Transverse colon (tissue), 4 donors: ENCODE measurements at regions of chr2 and their contacts with region 1.

Region 1: GRCh38 chr2:175585496-175585895 is 404.0 kb upstream of the ATP5MC3 start:
- DNase-seq: no peak
- H3K4me3 ChIP-seq: no peak overlapping the region
- H3K27ac ChIP-seq: no peak overlapping the region
- H3K4me1 ChIP-seq: no peaks in the 10 kb centered on the region
- H3K27me3 ChIP-seq: no peaks in the 10 kb centered on the region
- CTCF ChIP-seq: no peak
- EP300 ChIP-seq: no peak
- POLR2A ChIP-seq: no peak

Region 2: DNA sequence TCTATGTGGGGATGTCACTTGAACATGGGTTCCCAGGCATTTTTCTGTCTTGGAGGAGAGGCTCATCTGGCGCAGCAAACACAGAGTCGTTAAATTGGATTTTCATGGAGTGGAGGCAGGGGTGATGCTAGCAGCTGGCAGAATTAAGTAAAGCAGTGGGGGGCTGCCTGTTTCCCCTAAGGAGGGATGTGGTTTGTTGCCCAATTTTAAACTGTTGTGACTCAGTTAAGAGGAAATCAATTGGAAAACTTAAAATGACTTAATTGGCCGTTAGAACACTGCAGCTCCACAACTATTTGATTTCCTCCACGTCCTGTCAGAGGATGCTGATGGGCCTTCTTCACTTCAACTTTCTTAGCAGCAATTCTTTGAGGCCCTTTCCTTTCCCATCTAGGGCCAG is 49.9 kb before region 1 on chr2:
- in situ Hi-C with region 1: no loop called
- intact Hi-C with region 1: loop called (anchors 1 kb)
- DNase-seq: no peak
- H3K4me3 ChIP-seq: no peak overlapping the region
- H3K27ac ChIP-seq: no peak overlapping the region
- H3K4me1 ChIP-seq: no peaks in the 10 kb centered on the region
- H3K27me3 ChIP-seq: no peaks in the 10 kb centered on the region
- CTCF ChIP-seq: no peak
- EP300 ChIP-seq: no peak
- POLR2A ChIP-seq: no peak

Region 3: GRCh38 chr2:175755169-175755568 is 169.7 kb after region 1 on chr2:
- in situ Hi-C with region 1: no loop called
- intact Hi-C with region 1: no loop called
- DNase-seq: no peak
- H3K4me3 ChIP-seq: no peak overlapping the region
- H3K27ac ChIP-seq: no peak overlapping the region
- H3K4me1 ChIP-seq: no peaks in the 10 kb centered on the region
- H3K27me3 ChIP-seq: no peaks in the 10 kb centered on the region
- CTCF ChIP-seq: no peak
- EP300 ChIP-seq: no peak
- POLR2A ChIP-seq: no peak

Region 4: DNA sequence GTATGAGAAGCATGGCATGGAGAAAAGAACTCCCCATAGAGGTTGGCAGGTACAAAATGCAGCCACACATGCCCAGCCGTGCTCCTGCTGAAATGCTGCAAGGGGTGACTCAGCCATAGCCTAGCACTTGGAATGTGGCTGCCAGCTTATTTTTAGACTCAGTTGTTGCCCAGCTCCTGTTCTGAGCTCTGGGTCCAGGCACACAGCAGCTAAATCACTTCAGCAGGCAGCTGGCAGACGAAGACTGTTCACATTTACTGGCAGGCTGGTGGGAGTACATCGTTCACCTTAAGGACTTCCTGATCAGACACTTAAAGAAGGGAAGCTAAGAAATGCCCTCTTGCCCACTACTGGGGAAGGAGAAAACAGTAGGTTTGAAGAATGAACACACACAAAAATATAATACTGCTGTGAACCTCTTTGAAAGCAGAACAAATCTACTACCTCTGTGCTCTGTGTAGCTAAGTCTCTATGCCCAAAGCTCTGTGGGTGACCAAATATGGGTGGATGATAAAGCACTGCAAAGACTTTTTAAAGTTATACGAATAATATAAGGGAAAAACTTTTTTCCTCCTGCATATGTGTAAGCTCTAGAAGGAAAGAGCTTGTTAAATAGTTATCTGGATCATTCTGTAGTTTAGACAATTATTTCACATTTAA is 270.4 kb after region 1 on chr2:
- in situ Hi-C with region 1: no loop called
- intact Hi-C with region 1: no loop called
- DNase-seq: peak; percentile 8
- H3K4me3 ChIP-seq: no peak overlapping the region
- H3K27ac ChIP-seq: peak overlapping the region in 3 of 4 donors; percentile 19 to 27 (median 23)
- H3K4me1 ChIP-seq: no peaks in the 10 kb centered on the region
- H3K27me3 ChIP-seq: no peaks in the 10 kb centered on the region
- CTCF ChIP-seq: no peak
- EP300 ChIP-seq: no peak
- POLR2A ChIP-seq: no peak

Region 5: DNA sequence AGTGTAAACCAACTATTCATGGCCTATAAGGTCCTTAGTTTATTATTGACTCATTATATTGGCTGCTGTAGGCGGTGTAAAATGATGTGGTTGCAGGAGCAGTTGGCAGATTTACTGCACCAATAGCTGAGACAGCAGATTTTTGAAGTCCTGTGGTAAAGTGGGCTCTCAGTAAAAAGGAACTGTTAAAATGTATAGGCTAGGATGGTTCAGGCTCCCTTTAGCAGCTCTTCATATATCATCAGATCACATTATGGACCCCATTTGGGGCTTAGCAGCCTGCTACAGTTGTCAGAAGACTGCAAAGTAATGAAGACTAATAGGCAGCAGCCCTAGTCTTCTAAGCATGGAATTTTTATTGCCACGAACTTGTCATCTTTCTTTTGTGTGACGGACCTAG is 711.6 kb after region 1 on chr2:
- in situ Hi-C with region 1: no loop called
- intact Hi-C with region 1: no loop called
- DNase-seq: no peak
- H3K4me3 ChIP-seq: no peak overlapping the region
- H3K27ac ChIP-seq: no peak overlapping the region
- H3K4me1 ChIP-seq: peaks cover 0 to 20% (median 2%) of the 10 kb centered on the region in 4 donors
- H3K27me3 ChIP-seq: no peaks in the 10 kb centered on the region
- CTCF ChIP-seq: no peak
- EP300 ChIP-seq: no peak
- POLR2A ChIP-seq: no peak